ENCODE measurements at regions of chr17 and their contacts with region 1.

Region 1: DNA sequence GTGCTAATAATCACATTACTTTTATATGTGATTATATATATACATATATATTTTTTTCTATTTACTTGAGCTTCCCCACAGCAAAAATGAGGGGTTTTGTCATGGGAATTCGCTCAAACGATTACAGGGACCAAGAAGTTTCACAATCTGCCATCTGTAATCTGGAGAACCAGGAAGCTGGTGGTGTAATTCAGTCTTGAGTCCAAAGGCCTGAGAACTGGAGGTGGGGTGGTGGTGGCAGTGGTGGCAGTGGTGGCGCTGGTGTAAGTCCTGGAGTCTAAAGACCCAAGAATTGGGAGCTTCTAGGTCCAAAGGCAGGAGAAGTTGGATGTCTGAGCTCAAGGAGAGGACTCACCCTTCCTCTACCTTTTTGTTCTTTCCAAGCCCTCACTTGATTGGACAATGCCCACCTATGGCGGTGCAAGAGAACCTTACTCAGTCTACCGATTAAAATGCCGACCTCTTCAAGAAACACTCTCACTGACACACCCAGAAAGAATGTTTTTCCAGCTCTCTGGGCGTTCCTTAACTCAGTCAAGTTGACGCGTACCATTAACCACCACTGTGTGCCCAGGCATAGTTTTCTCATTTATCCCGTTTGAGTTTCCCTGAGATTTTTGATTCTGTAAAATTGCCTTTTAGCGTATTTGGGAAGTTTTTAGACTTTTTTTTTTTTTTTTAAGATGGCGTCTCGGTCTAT is 31.9 kb downstream of the POLR2A start:
- DNase-seq: peak in 1 of 2 experiments; percentile 33
- ATAC-seq: no peak
- H3K4me3 ChIP-seq: no peak overlapping the region
- H3K27ac ChIP-seq: no peak overlapping the region
- H3K4me1 ChIP-seq: no peaks in the 10 kb centered on the region
- CTCF ChIP-seq: no peak
- EP300 ChIP-seq: no peak
- POLR2A ChIP-seq: no peak
- RAD21 ChIP-seq: no peak

Region 2: DNA sequence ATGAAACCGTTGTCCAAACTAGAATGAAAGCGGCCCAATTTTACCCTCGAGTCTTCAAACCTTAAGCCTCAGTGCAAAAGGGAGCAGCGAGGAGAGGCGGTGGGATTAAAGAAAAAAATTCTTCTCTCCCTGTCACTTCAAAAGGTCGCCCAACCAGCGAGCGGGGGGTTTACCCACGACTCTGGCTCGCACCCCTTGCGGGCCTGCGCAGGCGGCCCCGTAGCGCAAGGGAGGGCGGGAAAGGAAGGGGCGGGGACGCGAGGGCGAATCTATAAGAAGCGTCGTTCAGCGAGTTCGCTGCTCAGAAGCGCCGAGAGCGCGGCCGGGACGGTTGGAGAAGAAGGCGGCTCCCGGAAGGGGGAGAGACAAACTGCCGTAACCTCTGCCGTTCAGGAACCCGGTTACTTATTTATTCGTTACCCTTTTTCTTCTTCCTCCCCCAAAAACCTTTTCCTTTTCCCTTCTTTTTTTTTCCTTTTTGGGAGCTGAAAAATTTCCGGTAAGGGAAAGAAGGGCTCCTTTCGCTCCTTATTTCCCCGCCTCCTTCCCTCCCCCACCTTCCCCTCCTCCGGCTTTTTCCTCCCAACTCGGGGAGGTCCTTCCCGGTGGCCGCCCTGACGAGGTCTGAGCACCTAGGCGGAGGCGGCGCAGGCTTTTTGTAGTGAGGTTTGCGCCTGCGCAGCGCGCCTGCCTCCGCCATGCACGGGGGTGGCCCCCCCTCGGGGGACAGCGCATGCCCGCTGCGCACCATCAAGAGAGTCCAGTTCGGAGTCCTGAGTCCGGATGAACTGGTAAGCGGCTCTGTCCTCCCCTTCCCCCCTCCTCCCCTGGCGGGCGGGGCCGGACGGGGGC is 31.8 kb before region 1 on chr17 and contains the start of gene POLR2A:
- CTCF ChIA-PET with region 1: interaction called, 25 read pairs
- POLR2A ChIA-PET with region 1: interaction called, 13 read pairs
- DNase-seq: peak; percentile 99
- ATAC-seq: peak; percentile 67 to 82
- H3K4me3 ChIP-seq: peak within 1 kb of the TSS; percentile 70
- H3K27ac ChIP-seq: peak within 1 kb of the TSS; percentile 91 to 97
- H3K4me1 ChIP-seq: peaks cover 48% of the 10 kb centered on the region
- CTCF ChIP-seq: no peak
- EP300 ChIP-seq: peak in 1 of 2 experiments; percentile 27; a peak in 1 of 5 replicates
- POLR2A ChIP-seq: peak; percentile 99
- RAD21 ChIP-seq: no peak
- polyA plus RNA-seq, gene POLR2A: 22.8 and 57.1 TPM in 2 replicates

Region 3: GRCh38 chr17:7502987-7503386 is 13.1 kb before region 1 on chr17:
- CTCF ChIA-PET with region 1: interaction called, 72 read pairs
- POLR2A ChIA-PET with region 1: no interaction called
- DNase-seq: peak in 1 of 2 experiments; percentile 37
- ATAC-seq: peak; percentile 62 to 72
- H3K4me3 ChIP-seq: no peak overlapping the region
- H3K27ac ChIP-seq: no peak overlapping the region
- H3K4me1 ChIP-seq: no peaks in the 10 kb centered on the region
- CTCF ChIP-seq: peak; percentile 31; the same call in 2 of the 3 replicates
- EP300 ChIP-seq: no peak
- POLR2A ChIP-seq: no peak
- RAD21 ChIP-seq: peak; percentile 34 to 54; a peak in 4 of 5 replicates

Region 4: GRCh38 chr17:7538891-7539290 is 22.8 kb after region 1 on chr17:
- CTCF ChIA-PET with region 1: interaction called, 66 read pairs
- POLR2A ChIA-PET with region 1: no interaction called
- DNase-seq: no peak
- ATAC-seq: no peak
- H3K4me3 ChIP-seq: no peak overlapping the region
- H3K27ac ChIP-seq: no peak overlapping the region
- H3K4me1 ChIP-seq: no peaks in the 10 kb centered on the region
- CTCF ChIP-seq: no peak
- EP300 ChIP-seq: no peak
- POLR2A ChIP-seq: no peak
- RAD21 ChIP-seq: no peak

Region 5: DNA sequence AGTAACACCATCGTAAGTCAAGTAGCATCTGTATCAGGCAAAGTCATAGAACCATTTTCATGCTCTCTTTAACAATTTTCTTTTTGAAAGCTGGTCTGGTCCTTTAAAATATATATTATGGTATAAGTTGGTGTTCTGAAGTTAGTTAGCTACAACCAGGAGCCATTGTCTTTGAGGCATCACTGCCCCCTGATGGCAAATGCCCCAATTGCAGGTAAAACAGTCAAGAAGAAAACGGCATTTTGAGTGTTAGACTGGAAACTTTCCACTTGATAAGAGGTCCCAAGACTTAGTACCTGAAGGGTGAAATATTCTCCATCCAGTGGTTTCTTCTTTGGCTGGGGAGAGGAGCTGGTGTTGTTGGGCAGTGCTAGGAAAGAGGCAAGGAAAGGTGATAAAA is 157.2 kb after region 1 on chr17:
- CTCF ChIA-PET with region 1: no interaction called
- POLR2A ChIA-PET with region 1: no interaction called
- DNase-seq: peak in 1 of 2 experiments; percentile 64
- ATAC-seq: peak in 1 of 2 experiments; percentile 27; a peak in 2 of 6 replicates
- H3K4me3 ChIP-seq: no peak overlapping the region
- H3K27ac ChIP-seq: no peak overlapping the region
- H3K4me1 ChIP-seq: no peaks in the 10 kb centered on the region
- CTCF ChIP-seq: peak; percentile 47
- EP300 ChIP-seq: no peak
- POLR2A ChIP-seq: no peak
- RAD21 ChIP-seq: peak; percentile 43 to 59

Measured in A549 (cell line).